Activated CD4-positive, alpha-beta T cell treated with anti-CD3 and anti-CD28 coated beads, Interleukin-2, amount 10 ng/mL, durations not matched to agents 24 days and 14 days (primary cell): ENCODE measurements at regions of chr3 and their contacts with region 1.

Region 1: DNA sequence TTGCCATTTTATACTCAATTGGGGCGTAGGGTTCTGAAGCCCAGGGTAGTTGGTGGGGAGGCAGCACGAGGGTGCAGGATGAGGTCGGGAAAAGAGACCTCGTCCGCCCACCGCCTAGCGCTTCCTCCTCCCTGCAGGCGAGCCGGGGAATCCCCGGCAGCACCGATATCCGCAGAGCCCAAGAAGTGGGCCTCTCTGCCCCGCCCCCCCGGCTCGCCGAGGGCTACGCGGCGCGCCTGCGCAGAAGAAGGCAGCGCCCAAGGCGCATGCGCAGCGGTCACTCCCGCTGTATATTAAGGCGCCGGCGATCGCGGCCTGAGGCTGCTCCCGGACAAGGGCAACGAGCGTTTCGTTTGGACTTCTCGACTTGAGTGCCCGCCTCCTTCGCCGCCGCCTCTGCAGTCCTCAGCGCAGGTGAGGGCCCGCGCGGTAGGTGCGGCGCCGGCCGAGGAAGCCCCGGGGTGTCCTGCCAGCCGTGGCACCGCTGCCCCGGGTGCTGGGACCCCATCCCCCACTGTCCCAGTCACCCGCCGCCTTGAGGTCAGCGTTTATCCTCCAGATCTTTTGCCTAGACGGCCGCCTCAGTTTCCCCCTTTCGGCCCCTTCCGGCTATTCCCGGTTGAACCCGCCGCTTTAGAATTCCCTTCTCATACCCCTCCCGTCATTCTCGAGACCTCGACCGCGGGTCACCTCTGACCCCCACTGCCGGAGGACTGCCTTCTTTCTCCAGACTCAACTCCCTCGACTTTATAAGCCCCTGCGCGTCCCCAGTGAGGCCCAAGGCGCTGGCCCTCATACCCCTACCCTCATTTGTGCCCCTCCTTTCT is at the start of gene ALAS1:
- DNase-seq: peak; percentile 99
- H3K4me3 Mint-ChIP-seq: peak within 1 kb of the TSS; percentile 100
- H3K27ac Mint-ChIP-seq: peak within 1 kb of the TSS; percentile 89
- H3K4me1 Mint-ChIP-seq: peaks cover 52% of the 10 kb centered on the region
- H3K27me3 Mint-ChIP-seq: no peaks in the 10 kb centered on the region
- total RNA-seq, gene ALAS1: 115 and 118 TPM in 2 replicates

Region 2: DNA sequence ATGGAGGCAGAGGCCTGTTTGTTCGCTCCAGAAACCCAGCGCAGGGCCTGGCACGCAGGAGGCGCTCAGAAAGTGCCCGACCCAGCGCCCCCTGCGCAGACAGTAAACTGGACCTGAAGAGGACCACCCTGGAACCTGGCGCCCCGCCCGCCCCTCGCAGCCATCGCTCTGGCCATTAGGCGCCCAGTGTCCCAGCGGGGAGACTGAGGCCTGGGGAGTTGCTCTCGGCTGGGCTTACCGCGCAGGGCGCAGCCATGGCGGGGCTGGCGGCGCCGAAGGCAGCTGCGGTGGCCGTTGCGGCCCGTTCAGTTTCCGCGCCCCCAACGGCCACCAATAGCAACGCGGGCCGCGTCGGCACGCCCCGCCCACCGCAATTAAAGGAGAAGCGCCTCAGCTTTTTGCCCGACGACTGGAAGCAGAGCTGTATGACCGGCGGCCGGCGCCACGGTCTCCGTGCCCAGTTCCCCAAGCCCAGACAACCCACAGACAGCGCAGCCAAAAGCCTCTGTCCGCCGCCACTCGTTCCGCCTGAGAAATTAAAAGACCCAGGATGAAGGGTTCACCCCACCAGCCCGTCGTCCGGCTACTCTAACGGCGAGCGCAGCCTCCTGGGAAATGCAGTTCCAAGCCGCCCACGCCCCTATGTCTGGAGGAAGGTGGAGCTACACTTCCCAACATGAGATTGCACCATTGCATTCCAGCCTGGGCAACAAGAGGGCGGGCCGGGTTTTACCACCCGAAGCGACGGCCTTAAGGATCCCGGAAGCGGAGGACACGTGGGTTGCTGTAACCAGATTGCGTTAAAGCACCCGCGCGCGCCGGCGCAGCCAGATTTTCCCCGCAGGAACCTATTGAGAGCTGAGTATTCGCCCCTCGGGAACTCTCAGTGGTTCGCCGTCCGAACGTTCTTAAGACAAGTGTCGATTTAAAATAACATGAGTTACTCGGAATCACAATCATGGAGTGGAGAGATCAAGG is 43.6 kb before region 1 on chr3 and contains the start of gene POC1A:
- intact Hi-C with region 1: loop called (anchors 1 kb)
- DNase-seq: peak; percentile 97
- H3K4me3 Mint-ChIP-seq: peak within 1 kb of the TSS; percentile 92
- H3K27ac Mint-ChIP-seq: peak within 1 kb of the TSS; percentile 97
- H3K4me1 Mint-ChIP-seq: peaks cover 20% of the 10 kb centered on the region
- H3K27me3 Mint-ChIP-seq: no peaks in the 10 kb centered on the region
- total RNA-seq, gene POC1A: 23.2 and 24.1 TPM in 2 replicates

Region 3: GRCh38 chr3:52238761-52239701 is 41.0 kb after region 1 on chr3 and contains the start of gene TWF2:
- intact Hi-C with region 1: no loop called
- DNase-seq: peak; percentile 97
- H3K4me3 Mint-ChIP-seq: peak within 1 kb of the TSS; percentile 93
- H3K27ac Mint-ChIP-seq: peak within 1 kb of the TSS; percentile 99
- H3K4me1 Mint-ChIP-seq: peaks cover 62% of the 10 kb centered on the region
- H3K27me3 Mint-ChIP-seq: no peaks in the 10 kb centered on the region
- total RNA-seq, gene TWF2: 80.3 and 87.0 TPM in 2 replicates

Region 4: DNA sequence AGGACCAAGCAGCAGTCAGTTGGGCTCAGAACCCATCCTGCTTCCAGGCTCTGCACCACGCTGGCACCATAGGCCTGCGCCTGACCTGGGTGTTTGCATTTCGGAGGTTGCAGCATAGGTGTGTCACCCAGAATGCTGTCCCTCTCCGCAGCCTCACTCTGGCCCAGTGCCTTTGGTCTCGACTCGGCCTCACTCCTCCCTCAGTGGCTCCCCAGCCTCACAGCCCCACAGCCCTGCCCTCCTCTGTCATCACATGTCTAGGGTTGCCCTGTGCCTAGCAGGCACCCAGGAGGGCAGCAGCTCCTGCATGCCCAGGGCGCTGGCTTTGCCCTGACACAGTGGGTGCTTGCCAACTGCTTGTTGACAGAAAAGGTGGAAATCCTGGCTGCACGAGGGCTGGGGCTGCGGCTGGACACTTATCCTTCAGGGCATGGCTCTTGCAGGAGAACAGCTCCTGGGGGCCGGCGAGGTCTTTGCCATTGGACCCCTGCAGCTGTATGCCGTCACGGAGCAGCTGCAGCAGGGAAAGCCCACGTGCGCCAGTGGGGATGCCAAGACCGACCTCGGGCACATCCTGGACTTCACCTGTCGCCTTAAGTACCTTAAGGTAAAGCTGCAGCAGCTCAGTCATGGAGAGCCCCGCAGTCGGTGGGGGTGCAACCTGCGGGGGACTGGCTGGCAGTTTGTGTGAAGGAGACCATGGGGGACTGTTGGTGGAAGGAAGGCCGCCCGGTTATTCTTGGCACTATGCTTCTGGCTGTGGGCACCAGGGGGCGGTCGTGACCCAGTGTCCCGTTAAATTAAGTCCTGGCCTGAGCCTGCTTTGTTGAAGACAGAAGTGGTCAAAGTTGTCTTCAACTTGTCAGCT is 273.6 kb after region 1 on chr3:
- intact Hi-C with region 1: no loop called
- DNase-seq: peak; percentile 75
- H3K4me3 Mint-ChIP-seq: no peak overlapping the region
- H3K27ac Mint-ChIP-seq: no peak overlapping the region
- H3K4me1 Mint-ChIP-seq: peaks cover 4% of the 10 kb centered on the region
- H3K27me3 Mint-ChIP-seq: no peaks in the 10 kb centered on the region

Region 5: GRCh38 chr3:52536369-52537164 is 338.5 kb after region 1 on chr3 and contains the start of gene UQCC5:
- intact Hi-C with region 1: loop called (anchors 10 kb)
- DNase-seq: peak; percentile 99
- H3K4me3 Mint-ChIP-seq: peak within 1 kb of the TSS; percentile 98
- H3K27ac Mint-ChIP-seq: peak within 1 kb of the TSS; percentile 100
- H3K4me1 Mint-ChIP-seq: peaks cover 33% of the 10 kb centered on the region
- H3K27me3 Mint-ChIP-seq: no peaks in the 10 kb centered on the region
- total RNA-seq, gene UQCC5: 13.8 TPM in 2 replicates